Activated CD4-positive, alpha-beta memory T cell treated with anti-CD3 and anti-CD28 coated beads for 36 hours (primary cell): ENCODE measurements at regions of chr12 and their contacts with region 1.

Region 1: DNA sequence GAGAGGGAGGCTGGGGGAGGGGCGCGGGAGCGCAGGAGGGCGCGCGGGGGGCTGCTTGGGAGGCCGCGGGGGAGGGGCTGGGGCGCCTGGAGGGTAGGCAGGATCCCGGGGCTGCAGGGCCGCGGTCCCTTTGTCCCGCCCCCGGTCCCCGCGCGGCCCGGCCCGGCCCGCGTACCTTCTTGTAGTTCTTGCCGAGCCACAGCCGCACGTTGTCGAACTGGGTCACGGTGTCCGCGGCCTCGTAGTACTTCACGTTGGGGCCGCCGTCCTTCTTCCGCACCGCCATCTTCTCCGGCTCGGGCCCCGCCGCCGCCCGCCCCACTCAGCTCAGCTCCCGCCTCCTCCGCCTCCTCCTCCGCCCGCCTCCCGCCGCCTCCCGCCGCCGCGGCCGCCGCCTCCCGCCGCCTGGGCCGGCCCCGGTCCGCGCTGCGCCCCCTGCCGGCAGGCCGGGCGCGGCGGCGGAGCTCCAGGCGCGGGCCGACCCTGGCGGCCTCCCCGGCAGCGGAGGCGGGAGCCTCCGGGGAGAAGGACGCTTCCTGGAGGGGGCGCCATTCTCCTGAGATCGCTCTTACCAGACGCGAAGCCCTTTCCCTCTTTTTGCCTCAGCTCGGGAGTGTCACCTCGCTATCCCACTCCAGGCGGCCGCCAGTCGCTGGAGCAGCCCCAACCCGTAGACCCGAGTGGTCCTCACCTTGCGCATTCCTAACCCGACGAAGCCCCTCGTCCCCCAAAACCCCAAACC is at the start of gene SMARCC2:
- DNase-seq: peak; percentile 92
- H3K4me3 Mint-ChIP-seq: peak within 1 kb of the TSS; percentile 87
- H3K27ac Mint-ChIP-seq: peak within 1 kb of the TSS; percentile 95
- H3K4me1 Mint-ChIP-seq: peaks cover 35% of the 10 kb centered on the region
- H3K27me3 Mint-ChIP-seq: no peaks in the 10 kb centered on the region
- total RNA-seq, gene SMARCC2: 96.4 to 103 TPM

Region 2: GRCh38 chr12:56104109-56104814 is 85.1 kb before region 1 on chr12 and contains the start of gene PA2G4:
- CTCF ChIA-PET with region 1: interaction called, 12 read pairs
- POLR2A ChIA-PET with region 1: interaction called, 9 read pairs
- intact Hi-C with region 1: no loop called
- DNase-seq: peak; percentile 99
- H3K4me3 Mint-ChIP-seq: peak within 1 kb of the TSS; percentile 100
- H3K27ac Mint-ChIP-seq: peak within 1 kb of the TSS; percentile 97
- H3K4me1 Mint-ChIP-seq: peaks cover 34% of the 10 kb centered on the region
- H3K27me3 Mint-ChIP-seq: no peaks in the 10 kb centered on the region
- total RNA-seq, gene PA2G4: 399 to 410 TPM

Region 3: DNA sequence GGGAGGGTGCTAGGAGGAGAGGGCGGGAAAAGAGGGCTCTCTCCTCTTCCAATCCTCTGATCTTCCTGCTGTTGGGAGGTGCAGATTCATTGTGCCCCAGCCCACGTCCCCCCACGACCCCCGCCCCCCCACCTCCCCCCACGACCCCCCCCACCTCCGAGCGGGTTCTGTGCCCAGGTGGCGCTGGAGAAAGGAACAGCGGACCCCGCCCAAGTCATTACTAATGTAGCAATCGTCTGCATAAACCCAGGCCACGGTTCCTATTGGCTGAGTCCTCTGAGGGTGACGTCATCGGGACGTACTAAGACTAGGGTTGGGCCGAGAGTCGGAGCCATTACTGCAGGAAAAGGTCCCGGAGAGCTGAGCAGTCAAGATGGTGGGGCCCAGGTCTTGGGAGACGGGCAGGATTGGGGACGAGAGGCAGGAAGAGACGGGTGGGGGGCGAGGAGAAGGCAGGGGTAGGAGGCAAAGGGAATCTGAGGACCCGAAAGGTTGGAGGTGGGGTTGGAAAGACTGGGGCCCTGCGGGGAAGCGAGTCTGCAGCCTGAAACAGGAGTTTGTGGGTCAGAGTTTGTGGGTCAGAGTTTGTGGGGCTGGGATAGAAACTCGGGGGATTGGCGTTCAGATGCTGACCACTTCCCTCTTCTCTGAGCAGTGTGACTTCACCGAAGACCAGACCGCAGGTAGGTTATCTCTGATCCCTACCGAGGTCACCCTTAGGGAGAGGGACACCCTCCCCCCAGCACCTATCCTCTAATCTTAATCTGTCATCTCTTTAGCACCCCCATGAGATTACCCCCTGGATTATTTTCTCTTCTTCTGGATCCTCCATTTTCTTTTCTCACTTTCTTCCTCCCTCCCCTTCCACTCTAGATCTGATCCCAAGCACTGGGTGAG is 31.1 kb before region 1 on chr12 and contains the start of gene MYL6:
- CTCF ChIA-PET with region 1: interaction called, 48 read pairs
- POLR2A ChIA-PET with region 1: interaction called, 16 read pairs
- intact Hi-C with region 1: no loop called
- DNase-seq: peak; percentile 95
- H3K4me3 Mint-ChIP-seq: peak within 1 kb of the TSS; percentile 95
- H3K27ac Mint-ChIP-seq: peak within 1 kb of the TSS; percentile 98
- H3K4me1 Mint-ChIP-seq: peaks cover 42% of the 10 kb centered on the region
- H3K27me3 Mint-ChIP-seq: no peaks in the 10 kb centered on the region
- total RNA-seq, gene MYL6: 1,196 to 1,215 TPM

Region 4: GRCh38 chr12:56206457-56207166 is 17.3 kb after region 1 on chr12:
- CTCF ChIA-PET with region 1: interaction called, 31 read pairs
- POLR2A ChIA-PET with region 1: interaction called, 5 read pairs
- intact Hi-C with region 1: no loop called
- DNase-seq: peak; percentile 59
- H3K4me3 Mint-ChIP-seq: no peak overlapping the region
- H3K27ac Mint-ChIP-seq: no peak overlapping the region
- H3K4me1 Mint-ChIP-seq: no peaks in the 10 kb centered on the region
- H3K27me3 Mint-ChIP-seq: no peaks in the 10 kb centered on the region

Region 5: GRCh38 chr12:56266693-56267442 is 77.5 kb after region 1 on chr12 and contains the start of gene COQ10A:
- CTCF ChIA-PET with region 1: interaction called, 12 read pairs
- POLR2A ChIA-PET with region 1: interaction called, 4 read pairs
- intact Hi-C with region 1: loop called (anchors 2 kb)
- DNase-seq: peak; percentile 91
- H3K4me3 Mint-ChIP-seq: peak within 1 kb of the TSS; percentile 88
- H3K27ac Mint-ChIP-seq: peak within 1 kb of the TSS; percentile 79
- H3K4me1 Mint-ChIP-seq: peaks cover 20% of the 10 kb centered on the region
- H3K27me3 Mint-ChIP-seq: no peaks in the 10 kb centered on the region
- total RNA-seq, gene COQ10A: 6.3 to 7.0 TPM

Region 6: DNA sequence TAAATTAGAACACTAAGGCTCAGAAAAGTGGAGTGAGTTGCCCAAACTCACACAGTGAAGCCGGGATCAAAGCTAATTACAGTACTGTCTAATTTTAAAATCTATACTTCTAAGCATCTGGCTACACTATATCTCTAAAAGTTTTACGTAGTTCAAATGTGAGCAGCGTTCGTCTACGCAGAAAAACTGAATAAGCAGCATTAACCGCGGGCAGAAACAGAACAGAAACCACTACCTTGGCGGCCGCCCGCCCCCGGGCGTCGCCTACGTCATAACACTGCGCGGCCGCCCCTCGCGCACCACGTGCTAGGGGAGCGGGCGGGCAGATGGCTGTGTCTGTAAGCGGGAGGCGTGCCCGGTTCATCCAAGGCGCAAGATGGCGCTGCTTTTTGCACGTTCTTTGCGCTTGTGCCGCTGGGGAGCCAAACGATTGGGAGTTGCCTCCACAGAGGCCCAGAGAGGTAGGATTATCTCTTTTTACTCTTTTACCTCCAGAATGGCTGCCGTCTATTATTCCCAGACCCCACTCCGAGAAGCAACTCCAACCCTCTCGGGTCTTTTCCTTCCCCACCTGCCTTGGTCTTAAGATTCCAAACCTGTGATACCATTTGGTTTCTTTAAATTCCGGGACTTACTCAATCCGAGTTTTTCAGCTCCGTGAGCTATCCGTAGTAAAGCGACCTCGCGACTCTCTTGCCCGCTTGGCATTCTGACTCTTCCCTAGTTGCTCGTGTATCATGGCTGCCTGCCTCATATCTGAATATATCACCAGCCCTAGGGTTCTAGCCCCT is 279.1 kb after region 1 on chr12 and contains the start of gene SPRYD4:
- CTCF ChIA-PET with region 1: interaction called, 6 read pairs
- POLR2A ChIA-PET with region 1: no interaction called
- intact Hi-C with region 1: loop called (anchors 1 kb)
- DNase-seq: peak; percentile 96
- H3K4me3 Mint-ChIP-seq: peak within 1 kb of the TSS; percentile 93
- H3K27ac Mint-ChIP-seq: peak within 1 kb of the TSS; percentile 96
- H3K4me1 Mint-ChIP-seq: peaks cover 31% of the 10 kb centered on the region
- H3K27me3 Mint-ChIP-seq: no peaks in the 10 kb centered on the region
- total RNA-seq, gene SPRYD4: 2.4 to 2.9 TPM